HEK293T (cell line): ENCODE measurements at regions of chr1 and their contacts with region 1.

Region 1: DNA sequence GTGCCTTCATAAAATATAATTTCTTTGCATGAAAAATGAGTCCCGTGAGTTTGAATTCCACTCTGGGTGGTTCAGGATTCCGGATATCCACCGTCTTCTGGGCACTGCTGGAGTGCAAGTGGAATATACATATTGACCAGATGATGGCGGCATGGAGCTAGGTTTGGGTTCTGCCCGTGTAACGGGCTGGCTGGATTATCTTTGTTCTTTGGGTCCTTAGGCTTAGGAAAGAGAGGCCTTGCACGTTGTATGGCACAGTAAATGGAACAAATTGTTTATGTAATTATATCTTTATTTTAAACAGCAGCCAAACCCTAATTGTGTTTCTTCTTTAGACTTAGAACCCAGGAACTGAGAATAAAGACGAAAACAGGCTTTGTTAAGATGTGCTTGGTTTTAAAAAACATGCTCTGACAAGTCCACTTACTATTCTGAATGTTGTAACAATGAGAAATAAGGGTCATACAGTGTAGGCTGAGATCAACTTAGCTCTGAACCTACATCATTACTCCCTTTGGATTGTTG is 13.5 kb upstream of the ACBD6 start:
- DNase-seq: peak; percentile 86

Region 2: DNA sequence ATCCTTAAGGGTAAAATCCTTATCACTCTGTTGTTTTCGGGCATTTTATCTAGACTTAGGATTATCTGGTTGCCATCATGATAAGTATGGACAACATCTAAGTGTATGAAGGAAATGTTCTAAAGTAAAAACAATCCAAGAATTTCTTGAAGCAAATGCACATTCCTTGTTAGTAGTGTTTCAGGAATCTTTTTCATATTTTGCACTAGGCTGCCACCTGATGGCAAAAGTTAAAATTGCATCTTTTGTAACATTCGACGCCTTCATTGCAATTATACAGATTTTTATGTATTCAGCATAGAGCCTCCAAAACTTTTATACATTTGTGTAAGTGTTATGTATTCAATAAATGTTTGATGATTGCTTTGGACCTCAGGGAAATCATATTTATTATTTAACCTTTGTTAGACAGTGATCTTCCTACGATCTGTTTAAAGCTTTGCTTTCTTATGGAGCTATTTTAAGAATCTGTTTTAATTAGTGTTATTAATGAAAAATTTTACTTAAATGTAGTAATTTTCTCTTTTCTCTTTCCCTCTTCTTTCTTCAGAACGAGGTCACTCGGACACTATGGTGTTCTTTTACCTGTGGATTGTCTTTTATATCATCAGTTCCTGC is 347.3 kb after region 1 on chr1:
- CTCF ChIA-PET with region 1: interaction called, 17 read pairs
- POLR2A ChIA-PET with region 1: no interaction called
- DNase-seq: peak; percentile 33